CD8-positive, alpha-beta memory T cell (primary cell): ENCODE measurements at regions of chr1 and their contacts with region 1.

Region 1: DNA sequence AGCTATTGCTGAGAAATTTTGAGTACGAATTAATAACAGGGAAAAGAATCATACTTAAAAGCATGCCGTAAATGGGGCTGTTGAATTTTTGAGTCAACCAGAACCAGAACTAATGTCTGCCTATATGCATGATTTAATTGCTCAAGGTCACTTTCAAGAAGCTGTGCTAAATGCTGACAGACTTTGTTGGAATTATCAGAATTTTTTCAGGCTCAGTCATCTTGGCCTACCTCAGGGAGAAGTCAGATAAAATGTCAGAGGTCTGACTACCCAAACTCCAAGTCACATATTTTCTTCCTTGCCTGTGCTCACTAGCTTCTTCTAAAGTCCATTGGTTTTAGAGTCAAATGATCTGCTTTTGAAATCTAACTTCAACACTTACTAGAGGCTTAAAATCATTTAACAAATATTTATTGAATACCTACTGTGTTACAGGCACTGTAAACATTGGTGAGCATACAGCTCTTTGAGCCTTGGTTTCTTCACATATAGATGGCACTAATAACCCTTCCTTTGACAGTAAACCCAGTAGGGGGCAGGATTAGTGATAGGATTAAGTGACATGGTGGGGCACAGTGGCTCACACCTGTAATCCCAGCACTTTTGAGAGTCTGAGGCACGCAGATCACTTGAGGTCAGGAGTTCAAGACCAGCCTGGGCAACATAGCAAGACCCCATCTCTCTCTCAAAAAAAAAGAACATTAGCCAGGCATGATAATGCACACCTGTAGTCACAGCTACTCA is 121.2 kb upstream of the SLC44A3 start:
- DNase-seq: no peak
- H3K4me3 ChIP-seq: no peak overlapping the region
- H3K4me3 Mint-ChIP-seq: no peak overlapping the region
- H3K27ac ChIP-seq: no peak overlapping the region
- H3K27ac Mint-ChIP-seq: no peak overlapping the region
- H3K4me1 ChIP-seq: no peaks in the 10 kb centered on the region
- H3K4me1 Mint-ChIP-seq: peaks cover 0 to 4% (median 2%) of the 10 kb centered on the region in 3 donors
- H3K27me3 ChIP-seq: no peaks in the 10 kb centered on the region
- H3K27me3 Mint-ChIP-seq: peaks cover 9% of the 10 kb centered on the region in 2 donors

Region 2: DNA sequence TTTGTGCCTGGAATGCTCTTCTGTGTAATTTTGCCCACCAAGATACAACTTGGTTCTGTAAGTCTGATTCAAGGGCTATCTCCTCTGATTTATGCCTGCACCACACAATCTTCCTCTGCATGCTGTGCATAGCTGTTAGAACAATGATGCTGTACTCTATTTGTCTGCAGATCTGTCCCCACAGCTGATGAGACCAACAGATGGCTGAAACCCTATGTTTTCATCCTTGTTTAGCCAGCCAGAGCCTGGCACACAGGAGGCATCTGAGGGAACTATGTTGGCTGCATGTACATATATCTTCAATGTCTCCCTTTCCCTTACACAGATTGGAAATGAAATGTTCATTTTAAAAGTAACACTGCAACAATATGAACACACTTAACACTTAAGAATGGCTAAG is 520.0 kb before region 1 on chr1:
- CTCF ChIA-PET with region 1: no interaction called
- POLR2A ChIA-PET with region 1: interaction called, 10 read pairs
- DNase-seq: no peak
- H3K4me3 ChIP-seq: no peak overlapping the region
- H3K4me3 Mint-ChIP-seq: no peak overlapping the region
- H3K27ac ChIP-seq: no peak overlapping the region
- H3K27ac Mint-ChIP-seq: no peak overlapping the region
- H3K4me1 ChIP-seq: no peaks in the 10 kb centered on the region
- H3K4me1 Mint-ChIP-seq: no peaks in the 10 kb centered on the region
- H3K27me3 ChIP-seq: no peaks in the 10 kb centered on the region
- H3K27me3 Mint-ChIP-seq: peaks cover 6 to 35% of the 10 kb centered on the region in 2 donors